B cell (primary cell): ENCODE measurements at regions of chr11 and their contacts with region 1.

Region 1: GRCh38 chr11:10490398-10491241 is 35.6 kb downstream of the AMPD3 start:
- DNase-seq: no peak
- ATAC-seq: no peak
- H3K4me3 ChIP-seq: no peak overlapping the region
- H3K4me3 Mint-ChIP-seq: no peak overlapping the region
- H3K27ac ChIP-seq: peak overlapping the region; percentile 94 to 98
- H3K27ac Mint-ChIP-seq: peak overlapping the region; percentile 90
- H3K4me1 ChIP-seq: peaks cover 24 to 34% of the 10 kb centered on the region in 2 donors
- H3K4me1 Mint-ChIP-seq: peaks cover 39% of the 10 kb centered on the region
- H3K27me3 ChIP-seq: no peaks in the 10 kb centered on the region
- H3K27me3 Mint-ChIP-seq: no peaks in the 10 kb centered on the region
- CTCF ChIP-seq: no peak

Region 2: DNA sequence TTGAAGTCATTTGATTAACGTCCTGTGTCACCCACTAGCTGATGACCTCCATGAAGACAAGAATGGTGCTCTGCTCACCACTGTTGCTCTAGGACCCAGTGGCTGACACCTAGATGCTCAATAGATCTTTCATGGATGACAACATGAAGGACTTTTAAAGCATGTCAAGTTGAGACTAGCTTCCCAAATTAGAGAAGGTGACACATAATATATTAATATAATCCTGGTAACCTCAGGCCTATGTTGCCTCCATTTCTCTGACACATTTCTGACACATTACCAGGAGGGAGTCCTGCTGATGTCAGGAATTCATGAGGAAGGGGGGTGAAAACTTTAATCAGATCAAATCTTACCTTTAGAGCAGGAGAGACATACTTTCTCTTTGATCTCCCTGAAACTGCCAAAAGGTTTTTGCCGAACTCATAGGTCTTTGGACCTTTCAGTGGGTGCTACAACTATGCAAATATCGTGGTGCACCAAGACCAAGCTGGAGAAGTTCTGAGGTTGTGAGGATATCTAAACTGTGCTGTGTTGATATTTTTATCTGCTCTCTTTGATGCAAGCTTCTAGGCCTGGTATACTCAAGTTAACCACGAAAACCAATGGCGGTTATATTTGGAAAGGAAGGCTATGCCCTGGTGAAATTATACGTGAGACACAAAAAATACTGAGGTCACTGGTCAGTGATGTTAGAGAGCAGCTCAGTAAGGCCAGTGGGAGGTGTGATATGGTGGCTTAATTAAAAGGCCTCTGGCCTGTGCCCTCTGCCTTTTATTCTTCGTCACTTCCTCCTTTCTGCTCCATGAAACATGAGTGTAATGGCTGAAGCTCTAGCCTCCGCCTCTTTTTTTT is 48.7 kb before region 1 on chr11:
- CTCF ChIA-PET with region 1: interaction called, 10 read pairs
- POLR2A ChIA-PET with region 1: interaction called, 6 read pairs
- intact Hi-C with region 1: no loop called
- DNase-seq: peak; percentile 85
- ATAC-seq: peak; percentile 89
- H3K4me3 ChIP-seq: peak overlapping the region in 2 of 5 experiments; percentile 1 to 20
- H3K4me3 Mint-ChIP-seq: peak overlapping the region; percentile 61
- H3K27ac ChIP-seq: peak overlapping the region; percentile 89 to 96
- H3K27ac Mint-ChIP-seq: peak overlapping the region; percentile 97
- H3K4me1 ChIP-seq: peaks cover 38 to 41% of the 10 kb centered on the region in 2 donors
- H3K4me1 Mint-ChIP-seq: peaks cover 39% of the 10 kb centered on the region
- H3K27me3 ChIP-seq: no peaks in the 10 kb centered on the region
- H3K27me3 Mint-ChIP-seq: no peaks in the 10 kb centered on the region
- CTCF ChIP-seq: no peak